Naive thymus-derived CD4-positive, alpha-beta T cell (primary cell): ENCODE measurements at regions of chr3 and their contacts with region 1.

Region 1: GRCh38 chr3:150408221-150409102 is at the start of gene TSC22D2:
- DNase-seq: peak; percentile 94 to 99 (median 98)
- ATAC-seq: peak; percentile 79
- H3K4me3 ChIP-seq: peak within 1 kb of the TSS; percentile 96
- H3K4me3 Mint-ChIP-seq: peak within 1 kb of the TSS; percentile 88 to 98 (median 91)
- H3K27ac ChIP-seq: peak within 1 kb of the TSS; percentile 98
- H3K27ac Mint-ChIP-seq: peak within 1 kb of the TSS; percentile 89 to 100 (median 98)
- H3K4me1 ChIP-seq: peaks cover 7 to 8% of the 10 kb centered on the region in 2 donors
- H3K4me1 Mint-ChIP-seq: peaks cover 25 to 41% (median 39%) of the 10 kb centered on the region in 7 donors
- H3K27me3 ChIP-seq: no peaks in the 10 kb centered on the region
- H3K27me3 Mint-ChIP-seq: peaks cover 0 to 13% (median 0%) of the 10 kb centered on the region in 5 donors
- total RNA-seq, gene TSC22D2: 17.9 to 42.1 (median 27.3) TPM

Region 2: DNA sequence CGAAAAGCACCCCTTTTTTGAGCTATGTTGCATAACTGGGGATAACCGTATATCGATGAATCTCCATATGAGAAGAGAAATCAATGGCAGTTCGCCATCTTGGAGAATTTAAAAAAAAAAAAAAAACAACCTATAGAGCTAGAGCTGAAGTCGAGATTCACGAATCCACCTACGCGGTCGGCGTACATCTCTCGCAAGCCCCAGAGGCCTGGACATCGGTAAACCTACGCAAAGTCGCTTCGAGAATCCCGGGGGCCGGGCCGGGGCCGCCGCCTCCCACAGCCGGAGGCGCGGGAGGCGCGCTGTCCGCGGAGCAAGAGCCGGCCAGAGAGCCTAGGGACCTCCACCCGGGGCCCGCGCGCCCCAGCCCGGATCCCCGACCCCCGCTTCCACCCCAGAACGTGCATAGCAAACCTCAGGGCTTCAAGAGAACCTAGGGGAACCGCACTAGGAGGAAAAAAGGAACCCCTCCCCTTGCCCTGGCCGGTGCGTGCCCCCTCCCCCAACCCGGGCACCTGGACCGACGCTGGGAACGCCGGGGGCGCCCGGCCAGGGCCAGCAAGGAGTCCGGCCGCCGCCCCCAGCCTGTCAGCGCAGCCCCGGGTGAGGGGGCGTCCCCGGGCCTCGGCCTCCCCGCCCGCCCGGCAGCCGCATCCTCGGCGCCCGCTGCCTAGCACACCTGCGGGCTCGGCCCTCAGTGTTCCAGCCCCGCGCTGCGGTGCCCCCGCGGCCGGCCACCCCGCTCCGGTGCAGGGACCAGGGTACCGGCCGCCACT is 438.3 kb before region 1 on chr3:
- CTCF ChIA-PET with region 1: no interaction called
- POLR2A ChIA-PET with region 1: interaction called, 5 read pairs
- intact Hi-C with region 1: loop called (anchors 1 to 10 kb)
- DNase-seq: peak; percentile 54 to 81 (median 75)
- ATAC-seq: peak; percentile 64
- H3K4me3 ChIP-seq: peak overlapping the region; percentile 53
- H3K4me3 Mint-ChIP-seq: peak overlapping the region; percentile 85 to 96 (median 92)
- H3K27ac ChIP-seq: peak overlapping the region; percentile 63
- H3K27ac Mint-ChIP-seq: peak overlapping the region in 8 of 9 donors; percentile 60 to 94 (median 86)
- H3K4me1 ChIP-seq: peaks cover 0 to 4% of the 10 kb centered on the region in 2 donors
- H3K4me1 Mint-ChIP-seq: peaks cover 16 to 26% (median 20%) of the 10 kb centered on the region in 7 donors
- H3K27me3 ChIP-seq: peaks cover 0 to 5% of the 10 kb centered on the region in 2 donors
- H3K27me3 Mint-ChIP-seq: peaks cover 6 to 55% (median 26%) of the 10 kb centered on the region in 5 donors

Region 3: DNA sequence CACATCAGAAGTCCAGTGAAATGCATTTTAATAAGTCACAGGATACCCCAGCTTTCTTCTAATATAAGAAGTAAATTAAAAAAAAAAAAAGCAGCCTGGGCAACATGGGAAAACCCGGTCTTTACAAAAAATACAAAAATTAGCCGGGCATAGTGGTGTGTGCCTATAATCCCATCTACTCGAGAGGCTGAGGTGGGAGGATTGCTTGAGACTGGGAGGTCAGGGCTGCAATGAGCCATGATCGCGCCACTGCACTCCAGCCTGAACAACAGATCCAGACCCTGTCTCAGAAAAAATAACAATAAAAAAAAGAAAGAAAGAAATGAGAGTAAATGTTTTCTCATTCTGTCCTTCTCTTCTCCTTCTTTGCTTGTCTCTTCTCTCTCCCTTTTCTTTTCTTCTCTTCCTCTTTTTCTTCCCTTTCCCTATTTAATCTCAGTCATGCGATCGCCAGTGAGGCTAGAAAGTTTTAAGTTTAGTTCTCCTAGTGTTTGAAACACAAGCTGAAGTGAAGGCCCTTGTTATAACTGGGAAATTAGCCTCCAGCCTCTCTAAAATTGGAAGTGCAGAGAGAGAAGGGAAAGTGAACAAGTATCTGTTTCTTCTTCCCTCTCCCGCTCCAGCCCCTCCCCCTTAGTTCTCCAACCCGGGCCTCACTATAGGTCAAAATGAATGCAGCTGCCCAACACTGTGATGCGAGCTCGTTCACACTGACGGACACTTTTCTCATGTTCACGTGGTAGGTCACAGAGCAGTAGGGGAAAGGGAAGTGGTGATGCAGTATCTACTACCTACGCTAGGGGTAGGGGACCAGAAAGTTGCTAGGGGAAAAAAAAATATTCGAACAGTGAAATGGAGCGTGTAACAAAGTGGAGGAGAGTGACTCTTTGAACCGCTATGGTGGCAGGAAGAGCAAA is 23.9 kb before region 1 on chr3:
- CTCF ChIA-PET with region 1: no interaction called
- POLR2A ChIA-PET with region 1: interaction called, 12 read pairs
- intact Hi-C with region 1: loop called (anchors 1 kb)
- DNase-seq: peak in 8 of 9 donors; percentile 47 to 70 (median 61)
- ATAC-seq: peak; percentile 96
- H3K4me3 ChIP-seq: peak overlapping the region; percentile 46
- H3K4me3 Mint-ChIP-seq: peak overlapping the region; percentile 56 to 88 (median 80)
- H3K27ac ChIP-seq: peak overlapping the region; percentile 42
- H3K27ac Mint-ChIP-seq: peak overlapping the region; percentile 22 to 85 (median 64)
- H3K4me1 ChIP-seq: peaks cover 7 to 8% of the 10 kb centered on the region in 2 donors
- H3K4me1 Mint-ChIP-seq: peaks cover 17 to 34% (median 20%) of the 10 kb centered on the region in 7 donors
- H3K27me3 ChIP-seq: no peaks in the 10 kb centered on the region
- H3K27me3 Mint-ChIP-seq: peaks cover 0 to 2% (median 0%) of the 10 kb centered on the region in 5 donors

Region 4: DNA sequence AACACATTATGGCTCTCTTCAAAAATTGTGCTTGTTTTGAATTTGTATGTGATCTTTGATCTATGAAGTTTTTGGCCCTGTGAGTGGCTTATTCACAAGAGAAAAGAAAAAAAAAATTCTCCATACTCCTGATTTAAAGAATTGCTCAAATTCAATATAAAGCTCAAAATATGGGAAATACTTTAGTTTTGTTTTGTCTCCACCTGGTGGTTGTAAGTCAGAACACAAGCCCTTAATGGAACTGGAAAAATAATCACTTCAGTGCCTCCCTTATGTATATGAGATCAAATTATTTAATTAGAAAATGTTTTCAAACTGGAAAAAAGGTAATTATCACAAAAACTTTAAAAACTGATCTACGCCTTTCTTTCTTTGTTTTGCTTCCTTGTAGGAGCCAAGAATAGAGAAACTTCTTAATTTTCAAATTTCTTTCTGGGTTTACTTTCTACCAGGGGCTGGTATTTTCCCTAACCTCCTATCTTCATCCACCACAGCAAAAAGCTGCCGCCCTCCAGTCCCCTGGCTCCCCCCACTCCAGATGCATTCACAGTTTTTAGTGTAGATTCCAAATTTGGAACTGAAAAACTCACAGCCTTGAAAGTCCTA is 87.2 kb after region 1 on chr3:
- CTCF ChIA-PET with region 1: interaction called, 8 read pairs
- POLR2A ChIA-PET with region 1: interaction called, 16 read pairs
- intact Hi-C with region 1: loop called (anchors 1 kb)
- DNase-seq: peak in 7 of 9 donors; percentile 9 to 59 (median 41)
- ATAC-seq: peak; percentile 73
- H3K4me3 ChIP-seq: no peak overlapping the region
- H3K4me3 Mint-ChIP-seq: no peak overlapping the region
- H3K27ac ChIP-seq: no peak overlapping the region
- H3K27ac Mint-ChIP-seq: no peak overlapping the region
- H3K4me1 ChIP-seq: no peaks in the 10 kb centered on the region
- H3K4me1 Mint-ChIP-seq: peaks cover 0 to 6% (median 0%) of the 10 kb centered on the region in 7 donors
- H3K27me3 ChIP-seq: no peaks in the 10 kb centered on the region
- H3K27me3 Mint-ChIP-seq: peaks cover 0 to 9% (median 0%) of the 10 kb centered on the region in 5 donors

Region 5: DNA sequence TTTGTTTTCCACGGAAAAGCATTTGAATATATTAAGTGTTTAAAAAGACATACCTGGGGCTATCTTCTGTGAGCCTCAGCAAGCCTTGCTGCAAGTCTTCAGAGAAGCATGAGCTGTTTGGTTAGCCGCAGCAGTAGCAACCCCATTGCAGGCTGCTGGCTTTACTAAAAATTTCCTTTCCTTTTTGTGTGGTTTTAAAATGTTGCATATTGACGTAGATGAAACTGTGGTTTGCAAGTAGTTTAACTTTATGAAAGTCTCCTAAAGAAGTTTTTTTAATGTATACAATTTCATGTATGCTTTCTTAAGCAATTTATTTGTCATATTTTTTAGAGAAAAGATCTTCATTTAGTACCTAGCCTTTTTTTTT is 794.6 kb after region 1 on chr3 and contains the start of gene GPR171:
- CTCF ChIA-PET with region 1: no interaction called
- POLR2A ChIA-PET with region 1: interaction called, 3 read pairs
- intact Hi-C with region 1: loop called (anchors 2 kb)
- DNase-seq: peak in 8 of 9 donors; percentile 62 to 88 (median 82)
- ATAC-seq: peak; percentile 95
- H3K4me3 ChIP-seq: peak within 1 kb of the TSS; percentile 79
- H3K4me3 Mint-ChIP-seq: peak within 1 kb of the TSS; percentile 72 to 94 (median 84)
- H3K27ac ChIP-seq: peak within 1 kb of the TSS; percentile 75
- H3K27ac Mint-ChIP-seq: peak within 1 kb of the TSS; percentile 76 to 98 (median 94)
- H3K4me1 ChIP-seq: peaks cover 45 to 57% of the 10 kb centered on the region in 2 donors
- H3K4me1 Mint-ChIP-seq: peaks cover 34 to 82% (median 71%) of the 10 kb centered on the region in 7 donors
- H3K27me3 ChIP-seq: no peaks in the 10 kb centered on the region
- H3K27me3 Mint-ChIP-seq: no peaks in the 10 kb centered on the region
- total RNA-seq, gene GPR171: 16.0 to 251 (median 63.4) TPM